Panc1 (cell line): ENCODE measurements at regions of chrX and their contacts with region 1.

Region 1: GRCh38 chrX:123713434-123713833 is 19.4 kb downstream of the THOC2 start:
- DNase-seq: no peak
- ATAC-seq: no peak
- H3K4me3 ChIP-seq: no peak overlapping the region
- H3K27ac ChIP-seq: no peak overlapping the region
- H3K4me1 ChIP-seq: peaks cover 11% of the 10 kb centered on the region; the same call in 1 of the 2 replicates
- H3K27me3 ChIP-seq: no peaks in the 10 kb centered on the region
- CTCF ChIP-seq: no peak

Region 2: DNA sequence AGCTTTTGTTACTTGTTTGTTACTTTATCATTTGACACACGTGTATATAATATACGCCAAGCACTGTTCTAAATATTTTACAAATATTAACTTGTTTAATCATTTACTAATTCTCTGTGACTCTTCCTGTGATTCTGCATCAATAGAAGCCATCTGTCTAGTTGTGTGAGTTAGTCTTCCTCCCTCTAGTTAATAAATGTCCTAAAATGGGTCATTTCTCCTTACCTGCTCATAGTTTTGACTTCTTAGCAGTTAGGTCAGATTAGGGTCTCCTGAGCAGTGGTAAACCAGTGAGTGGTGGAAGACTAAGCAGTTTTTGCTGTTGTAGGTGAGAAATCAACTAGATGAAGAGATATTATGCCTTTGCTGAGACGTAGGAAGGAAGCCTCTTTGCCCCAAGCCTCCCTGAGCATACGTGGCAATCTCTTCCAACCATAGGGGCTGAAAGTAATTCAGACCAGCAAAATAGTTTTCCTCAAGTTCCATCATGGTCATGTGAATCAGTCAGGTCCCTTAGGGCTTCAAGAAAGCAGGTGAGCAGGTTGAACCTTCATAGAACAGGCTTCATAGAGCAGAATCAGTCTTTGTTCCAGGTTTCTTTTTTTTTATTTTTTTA is 58.1 kb after region 1 on chrX:
- CTCF ChIA-PET with region 1: interaction called, 10 read pairs
- POLR2A ChIA-PET with region 1: no interaction called
- in situ Hi-C with region 1: no loop called
- intact Hi-C with region 1: no loop called
- DNase-seq: no peak
- ATAC-seq: no peak
- H3K4me3 ChIP-seq: no peak overlapping the region
- H3K27ac ChIP-seq: no peak overlapping the region
- H3K4me1 ChIP-seq: 0 out of 2 replicates have a peak, but pooled peaks cover 2% of the 10 kb centered on the region
- H3K27me3 ChIP-seq: no peaks in the 10 kb centered on the region
- CTCF ChIP-seq: no peak

Region 3: DNA sequence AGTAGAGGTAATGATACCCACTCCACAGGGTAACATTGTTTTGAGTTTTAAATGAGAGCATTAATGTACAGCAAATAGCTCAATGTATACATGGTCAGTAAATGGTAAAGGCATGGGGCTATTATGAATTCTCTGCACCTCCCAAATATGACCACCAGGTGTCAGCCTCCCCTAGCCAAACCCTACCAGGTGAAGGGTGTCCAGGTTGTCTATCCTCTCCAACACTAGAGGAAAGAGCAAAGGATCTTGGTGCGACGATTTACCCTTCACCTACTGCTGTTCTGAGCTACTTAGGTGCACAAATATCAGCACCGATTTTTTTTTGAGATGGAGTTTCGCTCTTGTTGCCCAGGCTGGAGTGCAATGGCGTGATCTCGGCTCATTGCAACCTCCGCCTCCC is 120.0 kb after region 1 on chrX:
- CTCF ChIA-PET with region 1: no interaction called
- POLR2A ChIA-PET with region 1: no interaction called
- in situ Hi-C with region 1: no loop called
- intact Hi-C with region 1: no loop called
- DNase-seq: peak; percentile 61
- ATAC-seq: peak; percentile 93
- H3K4me3 ChIP-seq: no peak overlapping the region
- H3K27ac ChIP-seq: no peak overlapping the region
- H3K4me1 ChIP-seq: peaks cover 9% of the 10 kb centered on the region; the same call in 1 of the 2 replicates
- H3K27me3 ChIP-seq: no peaks in the 10 kb centered on the region
- CTCF ChIP-seq: peak; percentile 86